Activated CD4-positive, alpha-beta T cell treated with anti-CD3 and anti-CD28 coated beads for 36 hours (primary cell): ENCODE measurements at regions of chr1 and their contacts with region 1.

Region 1: DNA sequence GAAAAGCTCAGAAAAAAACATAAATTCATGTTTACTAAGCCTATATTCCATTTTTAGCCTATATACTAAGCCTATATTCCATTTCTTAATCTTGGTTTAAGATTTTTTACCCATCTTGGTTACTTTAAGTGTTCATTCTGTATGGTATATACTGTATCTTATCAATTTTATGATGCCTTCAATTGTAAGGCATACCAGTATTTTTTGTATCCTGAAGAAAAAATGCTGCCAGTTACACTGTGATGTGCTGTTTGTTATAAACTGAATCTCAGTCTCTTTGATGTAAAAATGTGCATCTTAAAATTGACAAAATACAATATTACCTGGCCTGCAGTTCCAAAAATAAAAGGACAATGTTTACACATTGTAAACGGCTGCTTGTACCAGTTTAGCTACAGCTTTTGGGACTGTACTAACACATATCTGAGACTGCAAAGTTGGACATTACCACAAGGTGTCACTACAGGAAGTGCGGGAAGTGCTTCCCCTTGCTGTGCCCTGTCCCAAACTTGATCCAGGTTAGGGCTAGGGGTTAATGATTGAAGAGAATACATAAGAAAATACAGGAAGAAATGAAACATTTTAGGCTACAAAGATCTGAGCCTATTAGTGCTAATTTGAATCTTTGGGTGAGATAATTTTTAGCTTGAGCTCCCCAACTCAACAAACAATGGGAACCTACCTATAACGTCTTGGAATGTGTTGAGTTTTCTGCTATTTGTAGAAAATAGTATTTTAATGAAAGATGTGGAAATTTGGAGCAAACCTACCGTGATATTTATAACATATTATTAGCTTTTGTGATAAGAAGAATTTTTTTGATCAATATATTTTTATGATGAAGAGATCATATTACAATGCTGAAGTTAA is 108.9 kb downstream of the LBR start:
- DNase-seq: peak; percentile 36
- ATAC-seq: peak; percentile 55
- H3K4me3 Mint-ChIP-seq: no peak overlapping the region
- H3K27ac Mint-ChIP-seq: no peak overlapping the region
- H3K4me1 Mint-ChIP-seq: no peaks in the 10 kb centered on the region
- H3K27me3 Mint-ChIP-seq: no peaks in the 10 kb centered on the region

Region 2: GRCh38 chr1:224759681-224760091 is 559.3 kb before region 1 on chr1:
- CTCF ChIA-PET with region 1: no interaction called
- POLR2A ChIA-PET with region 1: no interaction called
- intact Hi-C with region 1: no loop called
- DNase-seq: no peak
- ATAC-seq: no peak
- H3K4me3 Mint-ChIP-seq: no peak overlapping the region
- H3K27ac Mint-ChIP-seq: no peak overlapping the region
- H3K4me1 Mint-ChIP-seq: no peaks in the 10 kb centered on the region
- H3K27me3 Mint-ChIP-seq: peaks cover 3% of the 10 kb centered on the region

Region 3: DNA sequence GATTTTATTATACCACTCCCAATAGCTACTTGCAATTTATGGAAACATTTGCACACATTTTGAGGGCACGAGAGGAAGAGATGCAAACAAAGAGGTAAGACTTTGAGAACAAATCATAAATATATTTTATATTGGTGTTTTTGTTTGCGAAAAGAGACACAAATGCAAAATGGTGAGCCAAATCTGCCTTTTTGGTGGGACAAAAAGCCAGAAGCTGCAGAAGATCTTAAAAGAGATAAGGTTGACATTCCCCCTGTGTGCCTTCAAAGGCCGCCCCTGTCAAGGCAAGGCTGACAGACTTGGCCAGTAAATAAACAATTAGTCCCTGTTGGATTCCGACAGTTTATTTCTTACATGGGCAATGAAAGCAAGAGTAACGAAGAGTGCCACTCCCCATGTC is 13.9 kb before region 1 on chr1:
- CTCF ChIA-PET with region 1: interaction called, 21 read pairs
- POLR2A ChIA-PET with region 1: no interaction called
- intact Hi-C with region 1: no loop called
- DNase-seq: no peak
- ATAC-seq: no peak
- H3K4me3 Mint-ChIP-seq: no peak overlapping the region
- H3K27ac Mint-ChIP-seq: no peak overlapping the region
- H3K4me1 Mint-ChIP-seq: no peaks in the 10 kb centered on the region
- H3K27me3 Mint-ChIP-seq: no peaks in the 10 kb centered on the region

Region 4: GRCh38 chr1:225332686-225333085 is 13.7 kb after region 1 on chr1:
- CTCF ChIA-PET with region 1: interaction called, 17 read pairs
- POLR2A ChIA-PET with region 1: no interaction called
- intact Hi-C with region 1: no loop called
- DNase-seq: no peak
- ATAC-seq: no peak
- H3K4me3 Mint-ChIP-seq: no peak overlapping the region
- H3K27ac Mint-ChIP-seq: no peak overlapping the region
- H3K4me1 Mint-ChIP-seq: no peaks in the 10 kb centered on the region
- H3K27me3 Mint-ChIP-seq: no peaks in the 10 kb centered on the region